ENCODE measurements at regions of chr10 and their contacts with region 1.

Region 1: GRCh38 chr10:59830601-59831259 is 75.6 kb downstream of the CCDC6 start:
- DNase-seq: peak; percentile 54
- ATAC-seq: no peak
- H3K4me3 ChIP-seq: no peak overlapping the region
- H3K4me3 Mint-ChIP-seq: no peak overlapping the region
- H3K27ac ChIP-seq: no peak overlapping the region
- H3K27ac Mint-ChIP-seq: no peak overlapping the region
- H3K4me1 ChIP-seq: peaks cover 24 to 36% of the 10 kb centered on the region in 2 donors
- H3K4me1 Mint-ChIP-seq: peaks cover 72% of the 10 kb centered on the region
- H3K27me3 ChIP-seq: no peaks in the 10 kb centered on the region
- H3K27me3 Mint-ChIP-seq: no peaks in the 10 kb centered on the region
- CTCF ChIP-seq: peak; percentile 75

Region 2: GRCh38 chr10:59734014-59734462 is 96.7 kb before region 1 on chr10:
- CTCF ChIA-PET with region 1: no interaction called
- POLR2A ChIA-PET with region 1: no interaction called
- intact Hi-C with region 1: no loop called
- DNase-seq: no peak
- ATAC-seq: no peak
- H3K4me3 ChIP-seq: no peak overlapping the region
- H3K4me3 Mint-ChIP-seq: no peak overlapping the region
- H3K27ac ChIP-seq: no peak overlapping the region
- H3K27ac Mint-ChIP-seq: no peak overlapping the region
- H3K4me1 ChIP-seq: no peaks in the 10 kb centered on the region
- H3K4me1 Mint-ChIP-seq: no peaks in the 10 kb centered on the region
- H3K27me3 ChIP-seq: no peaks in the 10 kb centered on the region
- H3K27me3 Mint-ChIP-seq: peaks cover 7% of the 10 kb centered on the region
- CTCF ChIP-seq: no peak

Region 3: GRCh38 chr10:59847326-59847725 is 16.6 kb after region 1 on chr10:
- CTCF ChIA-PET with region 1: interaction called, 8 read pairs
- POLR2A ChIA-PET with region 1: interaction called, 17 read pairs
- intact Hi-C with region 1: loop called (anchors 2 kb)
- DNase-seq: no peak
- ATAC-seq: no peak
- H3K4me3 ChIP-seq: no peak overlapping the region
- H3K4me3 Mint-ChIP-seq: no peak overlapping the region
- H3K27ac ChIP-seq: no peak overlapping the region
- H3K27ac Mint-ChIP-seq: no peak overlapping the region
- H3K4me1 ChIP-seq: peaks cover 9 to 12% of the 10 kb centered on the region in 2 donors
- H3K4me1 Mint-ChIP-seq: peaks cover 29% of the 10 kb centered on the region
- H3K27me3 ChIP-seq: no peaks in the 10 kb centered on the region
- H3K27me3 Mint-ChIP-seq: no peaks in the 10 kb centered on the region
- CTCF ChIP-seq: no peak

Region 4: DNA sequence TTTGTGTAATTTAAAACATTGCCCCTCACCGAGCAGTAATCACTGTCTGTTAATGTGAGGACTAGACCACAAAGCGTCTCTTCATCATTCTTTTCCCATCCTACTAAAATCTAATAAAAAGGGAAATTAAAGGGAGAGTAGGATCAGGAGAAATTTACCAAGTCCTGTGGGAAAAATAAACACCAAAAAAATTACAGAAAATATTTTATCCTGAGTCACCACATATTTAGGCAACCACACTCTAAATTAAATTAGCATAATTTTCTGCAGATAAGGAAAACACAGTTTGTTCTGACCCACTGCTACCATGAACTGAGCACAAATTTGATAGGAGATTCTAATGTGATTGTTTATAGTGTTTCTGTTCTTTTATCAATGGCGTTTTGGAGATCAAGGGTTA is 26.3 kb after region 1 on chr10:
- CTCF ChIA-PET with region 1: interaction called, 6 read pairs
- POLR2A ChIA-PET with region 1: no interaction called
- intact Hi-C with region 1: loop called (anchors 2 kb)
- DNase-seq: no peak
- ATAC-seq: no peak
- H3K4me3 ChIP-seq: no peak overlapping the region
- H3K4me3 Mint-ChIP-seq: no peak overlapping the region
- H3K27ac ChIP-seq: no peak overlapping the region
- H3K27ac Mint-ChIP-seq: no peak overlapping the region
- H3K4me1 ChIP-seq: peaks cover 31 to 41% of the 10 kb centered on the region in 2 donors
- H3K4me1 Mint-ChIP-seq: peaks cover 66% of the 10 kb centered on the region
- H3K27me3 ChIP-seq: no peaks in the 10 kb centered on the region
- H3K27me3 Mint-ChIP-seq: no peaks in the 10 kb centered on the region
- CTCF ChIP-seq: no peak

Region 5: GRCh38 chr10:59885430-59886134 is 54.9 kb after region 1 on chr10:
- CTCF ChIA-PET with region 1: interaction called, 4 read pairs
- POLR2A ChIA-PET with region 1: interaction called, 3 read pairs
- intact Hi-C with region 1: loop called (anchors 5 kb)
- DNase-seq: peak; percentile 90
- ATAC-seq: peak; percentile 96
- H3K4me3 ChIP-seq: peak overlapping the region in 3 of 5 experiments; percentile 0 to 47 (median 11)
- H3K4me3 Mint-ChIP-seq: peak overlapping the region; percentile 62
- H3K27ac ChIP-seq: peak overlapping the region in 1 of 2 donors; percentile 42
- H3K27ac Mint-ChIP-seq: peak overlapping the region; percentile 79
- H3K4me1 ChIP-seq: peaks cover 67 to 76% of the 10 kb centered on the region in 2 donors
- H3K4me1 Mint-ChIP-seq: peaks cover 87% of the 10 kb centered on the region
- H3K27me3 ChIP-seq: no peaks in the 10 kb centered on the region
- H3K27me3 Mint-ChIP-seq: no peaks in the 10 kb centered on the region
- CTCF ChIP-seq: no peak

Region 6: GRCh38 chr10:60032723-60033122 is 202.0 kb after region 1 on chr10:
- CTCF ChIA-PET with region 1: interaction called, 6 read pairs
- POLR2A ChIA-PET with region 1: no interaction called
- intact Hi-C with region 1: loop called (anchors 5 kb)
- DNase-seq: peak; percentile 67
- ATAC-seq: peak; percentile 36
- H3K4me3 ChIP-seq: no peak overlapping the region
- H3K4me3 Mint-ChIP-seq: no peak overlapping the region
- H3K27ac ChIP-seq: no peak overlapping the region
- H3K27ac Mint-ChIP-seq: no peak overlapping the region
- H3K4me1 ChIP-seq: peaks cover 6 to 7% of the 10 kb centered on the region in 2 donors
- H3K4me1 Mint-ChIP-seq: peaks cover 10% of the 10 kb centered on the region
- H3K27me3 ChIP-seq: no peaks in the 10 kb centered on the region
- H3K27me3 Mint-ChIP-seq: no peaks in the 10 kb centered on the region
- CTCF ChIP-seq: peak; percentile 67